Naive thymus-derived CD4-positive, alpha-beta T cell (primary cell): ENCODE measurements at regions of chr14 and their contacts with region 1.

Region 1: DNA sequence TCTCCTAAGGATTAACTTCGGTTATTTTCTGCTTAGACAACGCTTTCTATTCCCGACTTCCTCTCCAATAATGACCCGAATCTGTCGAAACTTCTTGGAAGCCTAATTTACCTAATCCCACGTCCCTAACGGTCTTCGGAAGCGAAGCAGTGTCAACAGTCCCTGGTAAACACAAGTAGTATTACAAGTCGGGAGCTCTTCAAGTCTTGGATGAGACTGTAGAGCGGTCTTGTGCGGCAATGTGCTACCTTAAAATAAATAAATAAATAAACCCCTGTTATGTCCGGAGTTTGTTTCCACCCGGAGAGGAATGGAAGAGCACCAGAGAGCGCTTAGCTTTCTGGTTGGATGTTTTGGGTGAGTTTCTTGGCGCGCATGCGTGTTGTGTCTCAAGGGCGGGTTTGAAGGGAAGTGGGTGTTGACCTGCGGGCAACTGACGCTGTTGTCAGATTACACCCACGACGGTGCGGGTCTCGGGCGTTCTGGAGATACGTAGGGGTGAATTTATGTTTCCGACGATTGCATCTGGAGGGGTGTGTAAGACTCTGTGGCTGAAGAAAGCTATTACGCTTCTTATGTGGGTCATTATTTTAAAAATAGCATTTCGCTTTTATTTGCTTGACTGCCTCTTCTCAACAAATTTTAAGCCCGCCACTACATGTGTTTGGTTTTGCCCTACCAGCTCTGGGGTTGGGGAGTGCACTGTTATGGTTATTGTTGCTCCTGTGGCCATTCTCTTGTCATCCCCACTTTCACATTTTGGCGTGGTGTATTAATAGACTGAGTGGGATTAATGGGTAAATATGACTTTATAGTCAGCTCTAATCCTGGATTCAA is at the starts of genes KIAA0586 and TIMM9:
- DNase-seq: peak; percentile 82 to 98 (median 97)
- ATAC-seq: peak; percentile 94
- H3K4me3 ChIP-seq: peak within 1 kb of the TSS; percentile 88
- H3K4me3 Mint-ChIP-seq: peak within 1 kb of the TSS; percentile 82 to 100 (median 94)
- H3K27ac ChIP-seq: peak within 1 kb of the TSS; percentile 93
- H3K27ac Mint-ChIP-seq: peak within 1 kb of the TSS; percentile 95 to 99 (median 98)
- H3K4me1 ChIP-seq: peaks cover 13 to 17% of the 10 kb centered on the region in 2 donors
- H3K4me1 Mint-ChIP-seq: peaks cover 18 to 65% (median 53%) of the 10 kb centered on the region in 7 donors
- H3K27me3 ChIP-seq: no peaks in the 10 kb centered on the region
- H3K27me3 Mint-ChIP-seq: peaks cover 0 to 3% (median 0%) of the 10 kb centered on the region in 5 donors
- total RNA-seq, gene KIAA0586: 26.4 to 52.5 (median 34.8) TPM
- total RNA-seq, gene TIMM9: 22.1 to 42.5 (median 37.0) TPM

Region 2: GRCh38 chr14:56579345-56580220 is 1847.9 kb before region 1 on chr14 and contains the start of gene TMEM260:
- CTCF ChIA-PET with region 1: no interaction called
- POLR2A ChIA-PET with region 1: no interaction called
- intact Hi-C with region 1: loop called in 1 of 2 experiments (anchors 5 kb)
- DNase-seq: peak; percentile 83 to 95 (median 92)
- ATAC-seq: peak; percentile 98
- H3K4me3 ChIP-seq: peak within 1 kb of the TSS; percentile 83
- H3K4me3 Mint-ChIP-seq: peak within 1 kb of the TSS; percentile 87 to 97 (median 95)
- H3K27ac ChIP-seq: peak within 1 kb of the TSS; percentile 88
- H3K27ac Mint-ChIP-seq: peak within 1 kb of the TSS; percentile 90 to 98 (median 96)
- H3K4me1 ChIP-seq: peaks cover 19 to 22% of the 10 kb centered on the region in 2 donors
- H3K4me1 Mint-ChIP-seq: peaks cover 33 to 45% (median 42%) of the 10 kb centered on the region in 7 donors
- H3K27me3 ChIP-seq: no peaks in the 10 kb centered on the region
- H3K27me3 Mint-ChIP-seq: no peaks in the 10 kb centered on the region
- total RNA-seq, gene TMEM260: 20.8 to 39.0 (median 27.4) TPM

Region 3: GRCh38 chr14:57390028-57390805 is 1037.3 kb before region 1 on chr14 and contains the start of gene NAA30:
- CTCF ChIA-PET with region 1: no interaction called
- POLR2A ChIA-PET with region 1: no interaction called
- intact Hi-C with region 1: loop called (anchors 1 to 5 kb)
- DNase-seq: peak; percentile 80 to 97 (median 92)
- ATAC-seq: peak; percentile 98
- H3K4me3 ChIP-seq: peak within 1 kb of the TSS; percentile 68
- H3K4me3 Mint-ChIP-seq: peak within 1 kb of the TSS; percentile 86 to 98 (median 94)
- H3K27ac ChIP-seq: peak within 1 kb of the TSS; percentile 72
- H3K27ac Mint-ChIP-seq: peak within 1 kb of the TSS; percentile 88 to 99 (median 95)
- H3K4me1 ChIP-seq: peaks cover 11 to 13% of the 10 kb centered on the region in 2 donors
- H3K4me1 Mint-ChIP-seq: peaks cover 31 to 58% (median 40%) of the 10 kb centered on the region in 7 donors
- H3K27me3 ChIP-seq: no peaks in the 10 kb centered on the region
- H3K27me3 Mint-ChIP-seq: peaks cover 0 to under 1% (median 0%) of the 10 kb centered on the region in 5 donors
- total RNA-seq, gene NAA30: 14.6 to 19.6 (median 16.2) TPM

Region 4: GRCh38 chr14:58244556-58245387 is 182.7 kb before region 1 on chr14 and contains the start of gene PSMA3:
- CTCF ChIA-PET with region 1: no interaction called
- POLR2A ChIA-PET with region 1: interaction called, 8 read pairs
- intact Hi-C with region 1: loop called (anchors 1 kb)
- DNase-seq: peak; percentile 95 to 98 (median 98)
- ATAC-seq: peak; percentile 96
- H3K4me3 ChIP-seq: peak within 1 kb of the TSS; percentile 100
- H3K4me3 Mint-ChIP-seq: peak within 1 kb of the TSS; percentile 89 to 99 (median 96)
- H3K27ac ChIP-seq: peak within 1 kb of the TSS; percentile 86
- H3K27ac Mint-ChIP-seq: peak within 1 kb of the TSS; percentile 97 to 99 (median 98)
- H3K4me1 ChIP-seq: peaks cover 23 to 26% of the 10 kb centered on the region in 2 donors
- H3K4me1 Mint-ChIP-seq: peaks cover 27 to 61% (median 52%) of the 10 kb centered on the region in 7 donors
- H3K27me3 ChIP-seq: no peaks in the 10 kb centered on the region
- H3K27me3 Mint-ChIP-seq: peaks cover 0 to 1% (median 0%) of the 10 kb centered on the region in 5 donors
- total RNA-seq, gene PSMA3: 76.5 to 357 (median 97.1) TPM

Region 5: DNA sequence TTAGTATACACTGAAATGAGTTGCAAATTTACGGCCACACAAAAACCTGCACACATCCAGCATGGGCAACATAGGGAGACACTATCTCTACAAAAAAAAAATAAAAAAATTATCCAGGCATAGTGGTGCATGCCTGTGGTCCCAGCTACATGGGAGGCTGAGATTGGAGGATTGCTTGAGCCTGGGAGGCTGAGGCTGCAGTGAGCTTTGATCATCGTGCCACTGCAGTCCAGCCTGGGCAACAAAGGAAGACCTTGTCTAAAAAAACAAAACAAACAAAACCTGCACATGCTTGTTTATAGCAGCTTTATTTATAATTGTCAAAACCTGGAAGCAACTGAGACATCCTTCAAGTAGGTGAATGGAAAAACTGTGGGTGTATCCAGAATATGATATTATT is 36.7 kb before region 1 on chr14:
- CTCF ChIA-PET with region 1: interaction called, 5 read pairs
- POLR2A ChIA-PET with region 1: interaction called, 29 read pairs
- intact Hi-C with region 1: loop called (anchors 1 kb)
- DNase-seq: no peak
- ATAC-seq: no peak
- H3K4me3 ChIP-seq: no peak overlapping the region
- H3K4me3 Mint-ChIP-seq: no peak overlapping the region
- H3K27ac ChIP-seq: no peak overlapping the region
- H3K27ac Mint-ChIP-seq: no peak overlapping the region
- H3K4me1 ChIP-seq: peaks cover 5 to 8% of the 10 kb centered on the region in 2 donors
- H3K4me1 Mint-ChIP-seq: peaks cover 0 to 6% (median 4%) of the 10 kb centered on the region in 7 donors
- H3K27me3 ChIP-seq: no peaks in the 10 kb centered on the region
- H3K27me3 Mint-ChIP-seq: no peaks in the 10 kb centered on the region

Region 6: DNA sequence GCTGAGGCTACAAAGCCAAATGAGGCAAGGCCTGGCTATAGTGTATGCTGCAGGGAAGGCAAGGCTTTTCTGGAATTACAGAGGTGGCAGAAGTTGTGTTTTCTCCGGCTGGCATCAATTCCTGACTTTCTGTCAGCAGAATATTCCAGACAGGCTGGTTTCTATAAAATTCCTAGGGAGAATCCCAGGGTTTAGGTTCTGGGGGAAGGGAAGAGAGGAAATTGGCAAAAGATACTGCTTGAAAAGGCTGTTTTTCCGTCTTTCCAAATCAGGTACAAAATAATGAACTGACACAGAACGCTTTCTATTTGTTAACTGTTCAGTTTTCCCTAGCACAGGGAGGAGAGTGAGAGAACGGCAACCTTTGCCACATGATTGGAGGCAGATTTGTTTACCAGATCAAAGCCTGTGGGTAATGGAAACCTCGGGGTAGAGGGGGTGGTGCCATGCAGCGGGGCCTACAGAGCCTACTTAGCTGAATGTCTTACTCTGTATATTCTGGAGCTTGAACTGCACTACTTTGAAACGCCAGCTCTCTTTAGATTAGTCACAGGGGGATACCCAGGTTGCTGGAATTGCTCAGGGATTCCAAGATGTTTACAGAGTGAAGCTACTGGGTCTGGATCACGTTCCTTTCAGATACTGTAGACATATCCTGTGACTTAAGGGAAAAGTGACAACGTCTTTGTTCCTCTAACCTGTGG is 144.4 kb after region 1 on chr14:
- CTCF ChIA-PET with region 1: no interaction called
- POLR2A ChIA-PET with region 1: interaction called, 4 read pairs
- intact Hi-C with region 1: loop called in 1 of 2 experiments (anchors 1 kb)
- DNase-seq: peak in 8 of 9 donors; percentile 41 to 80 (median 69)
- ATAC-seq: peak; percentile 87
- H3K4me3 ChIP-seq: no peak overlapping the region
- H3K4me3 Mint-ChIP-seq: peak overlapping the region; percentile 35 to 83 (median 70)
- H3K27ac ChIP-seq: peak overlapping the region; percentile 40
- H3K27ac Mint-ChIP-seq: peak overlapping the region; percentile 74 to 96 (median 93)
- H3K4me1 ChIP-seq: peaks cover 0 to 33% of the 10 kb centered on the region in 2 donors
- H3K4me1 Mint-ChIP-seq: peaks cover 14 to 67% (median 51%) of the 10 kb centered on the region in 7 donors
- H3K27me3 ChIP-seq: no peaks in the 10 kb centered on the region
- H3K27me3 Mint-ChIP-seq: no peaks in the 10 kb centered on the region

Region 7: GRCh38 chr14:60091550-60092530 is 1664.3 kb after region 1 on chr14 and contains the start of gene PCNX4:
- CTCF ChIA-PET with region 1: no interaction called
- POLR2A ChIA-PET with region 1: no interaction called
- intact Hi-C with region 1: loop called (anchors 5 kb)
- DNase-seq: peak; percentile 79 to 95 (median 94)
- ATAC-seq: peak; percentile 95
- H3K4me3 ChIP-seq: peak within 1 kb of the TSS; percentile 94
- H3K4me3 Mint-ChIP-seq: peak within 1 kb of the TSS; percentile 88 to 98 (median 95)
- H3K27ac ChIP-seq: peak within 1 kb of the TSS; percentile 96
- H3K27ac Mint-ChIP-seq: peak within 1 kb of the TSS; percentile 90 to 99 (median 96)
- H3K4me1 ChIP-seq: peaks cover 14 to 16% of the 10 kb centered on the region in 2 donors
- H3K4me1 Mint-ChIP-seq: peaks cover 28 to 48% (median 41%) of the 10 kb centered on the region in 7 donors
- H3K27me3 ChIP-seq: peaks cover 0 to 4% of the 10 kb centered on the region in 2 donors
- H3K27me3 Mint-ChIP-seq: peaks cover 0 to 5% (median 0%) of the 10 kb centered on the region in 5 donors
- total RNA-seq, gene PCNX4: 34.9 to 48.2 (median 43.3) TPM